Dendritic cell treated with granulocyte-macrophage colony-stimulating factor and Interleukin-4, amounts not matched to agents 40 ng/mL and 50 ng/mL, for 4 days (primary cell): ENCODE measurements at regions of chr4 and their contacts with region 1.

Region 1: DNA sequence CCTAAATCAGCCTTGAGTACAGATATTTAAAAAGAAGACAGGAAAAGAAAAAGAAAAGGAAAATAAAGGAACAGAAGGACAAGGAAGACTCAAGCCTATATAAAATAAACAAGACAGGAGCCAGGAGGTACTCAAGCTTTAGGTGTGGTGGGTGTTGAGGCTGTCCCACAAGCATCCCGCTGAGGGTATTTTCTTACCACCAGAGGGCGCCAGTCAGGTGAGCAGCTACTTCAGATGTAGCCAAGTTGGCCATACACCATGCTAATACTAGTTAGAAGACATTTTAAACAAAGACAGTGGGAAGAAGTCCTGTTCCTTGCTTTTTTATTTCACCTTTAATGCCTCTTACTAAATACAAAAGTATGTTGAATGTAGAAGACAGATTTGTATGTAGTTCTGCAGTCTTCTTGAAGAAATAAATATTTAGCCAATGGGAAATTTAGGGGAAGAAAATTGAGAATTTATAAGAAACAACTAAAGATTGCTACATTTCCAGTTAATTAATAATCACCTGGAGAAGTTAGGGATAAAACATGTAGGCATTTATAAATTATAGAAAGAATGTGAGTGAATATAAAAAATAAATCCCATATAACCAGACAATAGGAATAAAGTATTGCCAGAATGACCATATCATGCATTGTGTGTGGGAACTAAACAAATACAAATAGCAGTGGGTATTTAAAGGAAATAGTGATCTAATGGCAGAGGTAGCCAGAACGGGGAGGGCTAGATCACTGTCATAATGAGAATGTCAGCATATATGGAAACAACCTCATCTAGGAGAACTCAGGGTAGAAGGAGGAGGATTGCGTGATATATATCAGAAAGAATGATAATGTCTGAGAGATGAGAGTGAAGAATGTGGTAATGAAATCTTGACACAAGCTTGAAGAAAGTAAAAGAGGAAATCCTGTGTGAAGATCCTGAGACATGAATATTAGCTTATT is 71.0 kb downstream of the MTHFD2L start:
- H3K4me3 Mint-ChIP-seq: no peak overlapping the region
- H3K27ac Mint-ChIP-seq: peak overlapping the region; percentile 18
- H3K4me1 Mint-ChIP-seq: peaks cover 40% of the 10 kb centered on the region
- H3K27me3 Mint-ChIP-seq: no peaks in the 10 kb centered on the region

Region 2: DNA sequence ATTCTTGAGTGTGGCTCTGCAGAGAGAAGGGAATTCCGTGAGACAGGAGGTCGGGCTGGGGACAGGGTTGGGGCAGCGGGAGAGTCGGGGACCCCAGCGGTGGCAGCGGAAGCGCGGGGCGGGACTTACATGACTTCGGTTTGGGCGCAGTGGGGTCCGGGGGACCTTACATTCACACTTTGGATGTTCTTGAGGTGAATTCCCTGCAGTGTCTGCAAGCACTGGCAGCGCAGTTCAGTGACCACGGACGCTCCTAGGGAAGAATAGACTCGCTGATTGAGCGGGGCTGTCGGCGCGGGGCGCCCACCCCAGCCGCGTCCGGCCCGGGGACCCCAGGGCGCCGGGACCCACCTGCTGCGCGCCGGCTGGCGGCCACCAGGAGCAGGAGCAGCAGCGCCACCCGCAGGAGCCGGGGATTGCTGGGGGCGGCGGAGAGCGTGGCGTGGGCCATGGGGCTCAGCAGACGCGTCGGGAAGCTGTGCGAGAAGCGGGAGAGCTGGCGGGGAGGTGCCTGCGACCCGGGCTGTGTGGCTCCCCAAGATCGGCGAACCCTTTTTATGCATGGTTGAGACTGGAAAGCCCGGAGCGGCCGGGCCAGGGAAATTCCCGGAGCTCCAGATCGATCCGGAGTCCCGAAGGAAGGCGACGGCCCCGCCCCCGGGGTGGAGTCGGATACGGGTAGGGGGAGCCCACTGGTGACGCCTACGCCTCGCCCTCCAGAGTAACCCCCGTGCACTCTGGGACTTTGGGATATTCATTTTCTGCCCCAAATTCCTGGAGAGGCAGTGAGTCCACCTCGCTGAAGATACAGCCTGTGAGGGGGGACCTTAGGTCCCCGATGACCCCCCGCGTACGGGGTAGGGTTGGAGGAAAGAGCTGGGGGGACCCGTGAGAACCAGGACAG is 190.6 kb before region 1 on chr4 and contains the start of gene CXCL3:
- intact Hi-C with region 1: loop called (anchors 5 kb)
- H3K4me3 Mint-ChIP-seq: peak within 1 kb of the TSS; percentile 82
- H3K27ac Mint-ChIP-seq: peak within 1 kb of the TSS; percentile 86
- H3K4me1 Mint-ChIP-seq: peaks cover 41% of the 10 kb centered on the region
- H3K27me3 Mint-ChIP-seq: peaks cover 29% of the 10 kb centered on the region

Region 3: GRCh38 chr4:74157561-74158465 is 71.2 kb before region 1 on chr4 and contains the start of gene MTHFD2L:
- intact Hi-C with region 1: loop called (anchors 2 kb)
- H3K4me3 Mint-ChIP-seq: peak within 1 kb of the TSS; percentile 85
- H3K27ac Mint-ChIP-seq: peak within 1 kb of the TSS; percentile 89
- H3K4me1 Mint-ChIP-seq: peaks cover 19% of the 10 kb centered on the region
- H3K27me3 Mint-ChIP-seq: no peaks in the 10 kb centered on the region

Region 4: DNA sequence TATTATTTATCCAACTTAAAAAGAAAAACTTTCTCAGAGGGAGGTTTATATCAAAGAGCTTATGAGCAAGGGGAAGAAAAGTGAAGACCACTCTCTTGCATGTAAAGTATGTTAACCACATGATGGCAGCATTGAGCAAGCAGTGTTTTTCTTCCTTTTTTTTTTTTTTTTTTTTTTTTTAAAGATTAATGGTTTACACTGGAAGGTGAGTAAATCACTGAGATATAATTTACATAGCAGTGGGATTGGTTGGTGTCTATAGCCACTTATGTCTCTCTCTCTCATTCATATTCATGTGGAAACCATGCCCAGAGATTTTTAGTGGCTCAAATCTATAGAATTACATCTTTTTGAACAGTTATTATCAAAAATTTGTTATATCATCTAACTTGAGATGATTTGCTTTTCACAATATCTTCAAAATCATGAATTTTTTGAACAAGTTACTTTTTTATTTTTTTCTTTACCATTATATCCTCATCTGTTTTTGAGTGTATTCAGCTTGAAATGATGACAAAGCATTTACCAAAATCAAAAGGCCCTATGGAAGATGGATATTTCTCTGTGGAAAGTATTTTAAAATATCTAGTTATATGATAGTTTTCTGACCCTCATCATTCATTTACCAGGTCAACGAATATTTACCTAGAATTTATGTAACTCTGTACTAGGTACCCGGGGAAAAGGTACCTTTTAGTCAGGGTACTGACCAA is 39.5 kb before region 1 on chr4:
- intact Hi-C with region 1: loop called (anchors 5 kb)
- H3K4me3 Mint-ChIP-seq: no peak overlapping the region
- H3K27ac Mint-ChIP-seq: no peak overlapping the region
- H3K4me1 Mint-ChIP-seq: no peaks in the 10 kb centered on the region
- H3K27me3 Mint-ChIP-seq: no peaks in the 10 kb centered on the region

Region 5: DNA sequence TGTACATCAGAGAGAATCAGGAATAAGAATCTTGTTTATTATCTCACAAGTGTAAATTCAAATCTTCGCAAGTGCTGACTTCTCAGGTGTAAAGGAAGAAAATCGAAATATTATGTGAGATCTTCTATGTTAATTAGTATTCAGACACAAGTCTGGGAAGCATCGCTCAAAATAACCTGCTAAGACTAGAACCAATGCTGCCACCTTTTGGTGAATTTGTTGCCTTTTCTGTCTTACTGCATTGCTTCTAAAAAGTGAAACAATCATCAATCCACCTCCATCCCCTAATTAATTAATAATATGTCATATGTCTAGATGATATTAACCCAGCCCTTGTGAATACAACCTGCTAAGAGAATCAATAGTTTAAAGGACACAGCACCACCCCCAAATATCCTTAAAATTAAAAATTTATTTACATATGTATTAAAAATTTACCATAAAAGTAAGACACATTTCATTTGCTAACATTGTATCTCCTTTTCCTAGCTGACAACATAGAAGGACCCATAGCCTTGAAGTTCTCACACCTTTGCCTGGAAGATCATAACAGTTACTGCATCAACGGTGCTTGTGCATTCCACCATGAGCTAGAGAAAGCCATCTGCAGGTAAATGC is 82.8 kb after region 1 on chr4:
- intact Hi-C with region 1: loop called (anchors 1 kb)
- H3K4me3 Mint-ChIP-seq: no peak overlapping the region
- H3K27ac Mint-ChIP-seq: no peak overlapping the region
- H3K4me1 Mint-ChIP-seq: peaks cover 14% of the 10 kb centered on the region
- H3K27me3 Mint-ChIP-seq: no peaks in the 10 kb centered on the region

Region 6: GRCh38 chr4:74675673-74676279 is 446.8 kb after region 1 on chr4:
- intact Hi-C with region 1: loop called (anchors 10 kb)
- H3K4me3 Mint-ChIP-seq: no peak overlapping the region
- H3K27ac Mint-ChIP-seq: no peak overlapping the region
- H3K4me1 Mint-ChIP-seq: peaks cover 6% of the 10 kb centered on the region
- H3K27me3 Mint-ChIP-seq: no peaks in the 10 kb centered on the region